BJ (cell line): ENCODE measurements at regions of chr11 and their contacts with region 1.

Region 1: DNA sequence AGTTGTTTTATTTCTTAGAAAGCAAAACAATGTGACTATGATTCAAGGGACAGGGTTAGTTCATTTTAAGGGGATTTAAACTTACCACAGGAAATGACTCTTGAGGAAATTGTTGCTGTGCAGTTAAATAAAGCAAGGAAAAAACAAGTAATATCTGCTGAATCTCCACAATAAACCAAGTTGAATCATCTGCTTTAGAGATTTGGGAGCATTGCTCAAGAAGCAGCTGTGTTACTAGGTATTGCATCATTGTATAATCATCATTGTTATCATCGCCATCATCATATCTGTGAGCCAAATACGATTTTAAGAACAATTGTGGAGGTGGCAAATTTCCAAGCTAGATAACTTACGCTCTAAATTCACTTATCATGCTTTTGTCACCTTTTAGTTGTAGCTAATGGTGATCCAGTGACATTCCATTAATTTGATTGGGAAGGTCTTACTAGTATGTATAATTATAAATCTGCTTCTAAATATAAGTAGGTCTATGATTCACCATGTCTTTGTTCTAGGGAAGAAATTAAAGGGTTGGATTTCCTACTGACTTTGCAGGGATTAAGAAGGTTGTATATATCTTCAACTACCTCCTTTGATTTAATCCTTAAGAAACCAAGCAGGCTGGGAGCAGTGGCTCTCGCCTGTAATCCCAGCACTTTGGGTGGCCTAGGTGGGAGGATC is 19.9 kb downstream of the MMP10 start:
- DNase-seq: peak; percentile 98
- H3K4me3 ChIP-seq: no peak overlapping the region
- H3K27me3 ChIP-seq: peaks cover 2% of the 10 kb centered on the region
- CTCF ChIP-seq: no peak

Region 2: GRCh38 chr11:102361086-102362031 is 399.1 kb before region 1 on chr11:
- CTCF ChIA-PET with region 1: no interaction called
- POLR2A ChIA-PET with region 1: interaction called, 10 read pairs
- DNase-seq: no peak
- H3K4me3 ChIP-seq: no peak overlapping the region
- H3K27me3 ChIP-seq: no peaks in the 10 kb centered on the region
- CTCF ChIP-seq: no peak

Region 3: GRCh38 chr11:102780491-102780918 is 20.0 kb after region 1 on chr11 and contains the start of gene MMP10:
- CTCF ChIA-PET with region 1: interaction called, 10 read pairs
- POLR2A ChIA-PET with region 1: no interaction called
- DNase-seq: no peak
- H3K4me3 ChIP-seq: no peak within 1 kb of the TSS
- H3K27me3 ChIP-seq: no peaks in the 10 kb centered on the region; the same call in none of the 2 replicates
- CTCF ChIP-seq: peak; percentile 71
- polyA plus RNA-seq, gene MMP10: 0.16 and 0.29 TPM in 2 replicates